ENCODE measurements at regions of chr6 and their contacts with region 1.

Region 1: GRCh38 chr6:110179401-110180227 is at the start of gene WASF1:
- DNase-seq: peak; percentile 87 to 91
- ATAC-seq: peak; percentile 99
- H3K4me3 ChIP-seq: peak within 1 kb of the TSS; percentile 81 to 99 (median 87)
- H3K27ac ChIP-seq: peak within 1 kb of the TSS; percentile 80 to 93 (median 84)
- H3K4me1 ChIP-seq: peaks cover 38 to 45% of the 10 kb centered on the region in 2 donors
- H3K27me3 ChIP-seq: peaks cover 0 to 6% (median 0%) of the 10 kb centered on the region in 3 donors
- CTCF ChIP-seq: peak in 1 of 5 experiments; percentile 16
- POLR2A ChIP-seq: peak in 1 of 2 donors; percentile 27
- total RNA-seq, gene WASF1: 0.41 to 2.7 (median 1.4) TPM

Region 2: GRCh38 chr6:110389689-110390382 is 210.2 kb after region 1 on chr6:
- in situ Hi-C with region 1: no loop called
- intact Hi-C with region 1: loop called (anchors 2 kb)
- DNase-seq: no peak
- ATAC-seq: no peak
- H3K4me3 ChIP-seq: no peak overlapping the region
- H3K27ac ChIP-seq: no peak overlapping the region
- H3K4me1 ChIP-seq: no peaks in the 10 kb centered on the region
- H3K27me3 ChIP-seq: no peaks in the 10 kb centered on the region
- CTCF ChIP-seq: no peak
- POLR2A ChIP-seq: no peak

Region 3: GRCh38 chr6:110415086-110415916 is 235.7 kb after region 1 on chr6 and contains the start of gene DDO:
- in situ Hi-C with region 1: no loop called
- intact Hi-C with region 1: loop called (anchors 1 kb)
- DNase-seq: peak; percentile 82 to 96
- ATAC-seq: peak; percentile 98 to 99
- H3K4me3 ChIP-seq: peak within 1 kb of the TSS; percentile 55 to 73 (median 66)
- H3K27ac ChIP-seq: peak within 1 kb of the TSS; percentile 83 to 93 (median 92)
- H3K4me1 ChIP-seq: peaks cover 14 to 16% of the 10 kb centered on the region in 2 donors
- H3K27me3 ChIP-seq: no peaks in the 10 kb centered on the region
- CTCF ChIP-seq: no peak
- POLR2A ChIP-seq: no peak
- total RNA-seq, gene DDO: 1.8 to 3.5 (median 2.4) TPM

Region 4: DNA sequence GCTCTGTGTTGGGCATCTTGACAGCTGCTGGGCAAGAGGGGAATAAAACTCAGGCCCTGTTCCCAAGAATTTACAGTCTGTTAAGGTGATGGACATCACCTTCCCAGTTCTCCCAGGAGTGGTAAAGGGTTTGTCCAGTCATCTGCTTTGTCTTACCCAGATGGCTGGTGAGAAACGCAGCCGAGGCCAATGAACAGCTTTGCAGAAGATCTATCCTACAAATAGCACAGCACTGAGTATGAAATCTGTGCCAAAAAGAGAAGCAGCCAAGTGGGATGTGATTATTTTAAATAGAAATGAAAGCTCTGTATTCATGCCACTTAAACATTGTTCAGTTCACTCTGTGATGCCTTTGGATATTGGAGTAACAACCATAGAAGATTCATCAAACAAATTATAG is 429.5 kb after region 1 on chr6:
- in situ Hi-C with region 1: no loop called
- intact Hi-C with region 1: no loop called
- DNase-seq: no peak
- ATAC-seq: no peak
- H3K4me3 ChIP-seq: no peak overlapping the region
- H3K27ac ChIP-seq: no peak overlapping the region
- H3K4me1 ChIP-seq: no peaks in the 10 kb centered on the region
- H3K27me3 ChIP-seq: no peaks in the 10 kb centered on the region
- CTCF ChIP-seq: no peak
- POLR2A ChIP-seq: no peak

Region 5: GRCh38 chr6:110981202-110981600 is 801.6 kb after region 1 on chr6:
- in situ Hi-C with region 1: no loop called
- intact Hi-C with region 1: loop called (anchors 10 kb)
- DNase-seq: no peak
- ATAC-seq: no peak
- H3K4me3 ChIP-seq: peak overlapping the region; percentile 90 to 96 (median 93)
- H3K27ac ChIP-seq: peak overlapping the region; percentile 79 to 94 (median 89)
- H3K4me1 ChIP-seq: peaks cover 0 to 9% of the 10 kb centered on the region in 2 donors
- H3K27me3 ChIP-seq: no peaks in the 10 kb centered on the region
- CTCF ChIP-seq: no peak
- POLR2A ChIP-seq: no peak

Measured in gastrocnemius medialis (tissue), 4 donors.